Ascending aorta (tissue), 2 donors: ENCODE measurements at regions of chr5 and their contacts with region 1.

Region 1: GRCh38 chr5:80407735-80408482 is at the start of gene ZFYVE16:
- DNase-seq: peak; percentile 91 to 99
- H3K4me3 ChIP-seq: peak within 1 kb of the TSS; percentile 71 to 78
- H3K27ac ChIP-seq: peak within 1 kb of the TSS; percentile 89 to 95
- H3K4me1 ChIP-seq: peaks cover 3 to 15% of the 10 kb centered on the region in 2 donors
- H3K27me3 ChIP-seq: no peaks in the 10 kb centered on the region
- CTCF ChIP-seq: peak; percentile 39 to 57 (median 46)
- total RNA-seq, gene ZFYVE16: 10.0 TPM

Region 2: GRCh38 chr5:79612667-79613198 is 795.2 kb before region 1 on chr5:
- intact Hi-C with region 1: loop called (anchors 5 kb)
- DNase-seq: no peak
- H3K4me3 ChIP-seq: peak overlapping the region; percentile 87 to 99
- H3K27ac ChIP-seq: peak overlapping the region; percentile 95 to 96
- H3K4me1 ChIP-seq: peaks cover 0 to 9% of the 10 kb centered on the region in 2 donors
- H3K27me3 ChIP-seq: no peaks in the 10 kb centered on the region
- CTCF ChIP-seq: no peak

Region 3: DNA sequence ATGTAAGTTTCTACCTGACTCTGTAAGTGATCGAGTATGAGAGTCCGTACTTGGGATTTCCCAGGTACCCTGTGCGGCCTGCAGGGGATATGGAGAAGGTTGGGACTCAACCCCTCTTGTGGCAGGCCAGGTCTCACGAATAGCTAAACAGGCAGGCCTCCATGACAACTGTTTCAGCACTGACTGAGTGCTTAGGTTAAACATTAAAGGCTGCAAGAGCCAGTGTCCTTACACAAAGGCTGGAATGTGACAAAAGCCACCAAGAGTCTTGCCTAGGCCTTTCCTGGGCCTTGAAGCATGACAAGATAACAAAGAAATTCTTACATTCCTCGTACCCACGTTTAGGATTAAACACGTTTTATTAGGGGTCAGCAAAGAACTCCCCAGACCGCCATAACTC is 314.1 kb before region 1 on chr5:
- intact Hi-C with region 1: loop called (anchors 5 kb)
- DNase-seq: no peak
- H3K4me3 ChIP-seq: no peak overlapping the region
- H3K27ac ChIP-seq: no peak overlapping the region
- H3K4me1 ChIP-seq: no peaks in the 10 kb centered on the region
- H3K27me3 ChIP-seq: no peaks in the 10 kb centered on the region
- CTCF ChIP-seq: no peak

Region 4: GRCh38 chr5:80206282-80206681 is 201.6 kb before region 1 on chr5:
- intact Hi-C with region 1: no loop called
- DNase-seq: no peak
- H3K4me3 ChIP-seq: no peak overlapping the region
- H3K27ac ChIP-seq: no peak overlapping the region
- H3K4me1 ChIP-seq: no peaks in the 10 kb centered on the region
- H3K27me3 ChIP-seq: no peaks in the 10 kb centered on the region
- CTCF ChIP-seq: no peak

Region 5: GRCh38 chr5:80487829-80488721 is 80.2 kb after region 1 on chr5 and contains the start of gene FAM151B:
- intact Hi-C with region 1: loop called (anchors 5 kb)
- DNase-seq: peak; percentile 42 to 89
- H3K4me3 ChIP-seq: peak within 1 kb of the TSS; percentile 67 to 74
- H3K27ac ChIP-seq: peak within 1 kb of the TSS; percentile 70 to 76
- H3K4me1 ChIP-seq: no peaks in the 10 kb centered on the region
- H3K27me3 ChIP-seq: no peaks in the 10 kb centered on the region
- CTCF ChIP-seq: peak in 1 of 3 experiments; percentile 14
- total RNA-seq, gene FAM151B: not detected